AG04450 (cell line): ENCODE measurements at regions of chr10 and their contacts with region 1.

Region 1: GRCh38 chr10:30591249-30591670 is 38.3 kb downstream of the LYZL2 start:
- DNase-seq: peak; percentile 10
- H3K4me3 ChIP-seq: no peak overlapping the region
- H3K27ac ChIP-seq: no peak overlapping the region
- H3K27me3 ChIP-seq: peaks cover 16% of the 10 kb centered on the region
- CTCF ChIP-seq: peak; percentile 81

Region 2: GRCh38 chr10:30270247-30270646 is 321.0 kb before region 1 on chr10:
- CTCF ChIA-PET with region 1: interaction called, 13 read pairs
- POLR2A ChIA-PET with region 1: no interaction called
- DNase-seq: no peak
- H3K4me3 ChIP-seq: no peak overlapping the region
- H3K27ac ChIP-seq: no peak overlapping the region
- H3K27me3 ChIP-seq: peaks cover 14% of the 10 kb centered on the region
- CTCF ChIP-seq: peak; percentile 37

Region 3: DNA sequence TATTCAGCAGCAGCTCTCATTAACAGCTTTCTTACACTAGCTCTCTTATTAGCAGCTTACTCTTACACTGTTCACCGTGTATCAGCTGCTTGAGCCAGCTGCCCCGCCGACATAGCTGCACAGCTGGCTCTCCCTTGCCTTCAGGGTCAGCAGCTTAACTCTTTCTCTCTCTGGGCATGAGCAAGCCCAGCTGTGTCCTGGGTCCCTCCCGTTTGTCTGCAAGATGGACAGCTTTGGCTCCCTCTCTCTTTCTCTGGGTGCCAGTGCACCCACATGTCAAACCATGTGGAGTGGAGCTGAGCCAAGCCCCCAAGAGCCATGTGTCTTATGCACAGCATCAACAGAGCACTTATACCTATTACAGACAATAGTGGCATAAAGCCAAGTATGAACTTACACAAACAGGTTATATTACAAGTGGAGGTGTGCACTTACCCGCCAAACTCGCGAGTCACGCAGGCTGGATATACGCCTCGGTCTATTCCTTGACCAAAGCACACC is 206.5 kb before region 1 on chr10:
- CTCF ChIA-PET with region 1: interaction called, 131 read pairs
- POLR2A ChIA-PET with region 1: no interaction called
- DNase-seq: no peak
- H3K4me3 ChIP-seq: no peak overlapping the region
- H3K27ac ChIP-seq: no peak overlapping the region
- H3K27me3 ChIP-seq: peaks cover 30% of the 10 kb centered on the region
- CTCF ChIP-seq: peak; percentile 51

Region 4: GRCh38 chr10:30404540-30404939 is 186.7 kb before region 1 on chr10:
- CTCF ChIA-PET with region 1: interaction called, 11 read pairs
- POLR2A ChIA-PET with region 1: no interaction called
- DNase-seq: no peak
- H3K4me3 ChIP-seq: no peak overlapping the region
- H3K27ac ChIP-seq: no peak overlapping the region
- H3K27me3 ChIP-seq: peaks cover 10% of the 10 kb centered on the region
- CTCF ChIP-seq: no peak

Region 5: GRCh38 chr10:30431435-30431911 is 159.8 kb before region 1 on chr10:
- CTCF ChIA-PET with region 1: interaction called, 10 read pairs
- POLR2A ChIA-PET with region 1: no interaction called
- DNase-seq: no peak
- H3K4me3 ChIP-seq: no peak overlapping the region
- H3K27ac ChIP-seq: no peak overlapping the region
- H3K27me3 ChIP-seq: no peaks in the 10 kb centered on the region
- CTCF ChIP-seq: no peak

Region 6: GRCh38 chr10:30529373-30529998 is 61.8 kb before region 1 on chr10:
- CTCF ChIA-PET with region 1: interaction called, 17 read pairs
- POLR2A ChIA-PET with region 1: no interaction called
- DNase-seq: no peak
- H3K4me3 ChIP-seq: no peak overlapping the region
- H3K27ac ChIP-seq: no peak overlapping the region
- H3K27me3 ChIP-seq: peaks cover 2% of the 10 kb centered on the region
- CTCF ChIP-seq: no peak

Region 7: DNA sequence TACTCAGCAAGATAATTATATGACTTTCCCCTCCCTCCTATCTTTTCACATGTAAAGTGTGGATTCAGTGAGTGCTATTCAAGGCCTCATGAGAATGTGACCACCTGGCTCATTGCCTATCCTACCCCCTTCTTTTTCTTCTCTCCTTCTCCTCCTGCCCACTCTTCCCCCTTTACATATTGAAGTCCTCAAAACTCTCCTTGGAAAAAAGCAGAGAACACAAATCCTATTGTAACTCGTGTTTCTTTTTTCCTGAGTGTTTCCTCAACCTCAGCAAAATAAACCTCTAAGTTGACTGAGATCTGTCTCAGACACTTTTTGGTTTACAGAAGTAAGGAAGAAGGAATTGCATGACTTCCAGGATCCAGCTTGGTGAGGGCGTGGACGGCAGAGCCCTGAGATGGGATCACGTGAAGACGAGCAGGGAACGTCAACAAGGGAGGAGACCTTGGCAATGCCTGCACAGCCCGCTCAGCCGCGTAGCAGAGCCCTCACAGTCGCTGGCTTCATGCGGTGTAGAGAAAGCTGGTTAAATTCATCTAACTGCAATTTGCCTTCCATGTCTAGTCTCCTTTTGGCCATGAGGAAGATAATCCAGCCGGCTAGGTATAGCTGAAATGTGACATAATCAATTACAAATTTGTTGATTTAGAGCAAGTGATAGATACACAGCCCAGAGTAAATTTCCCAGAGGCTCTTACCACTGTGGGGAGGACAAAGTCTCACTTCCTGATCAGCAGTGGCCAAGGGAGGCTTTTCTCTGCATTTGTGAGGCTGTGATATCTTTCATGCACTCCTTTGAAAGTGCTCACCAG is 37.4 kb before region 1 on chr10:
- CTCF ChIA-PET with region 1: interaction called, 10 read pairs
- POLR2A ChIA-PET with region 1: no interaction called
- DNase-seq: no peak
- H3K4me3 ChIP-seq: peak overlapping the region; percentile 23; the same call in 1 of the 2 replicates
- H3K27ac ChIP-seq: peak overlapping the region; percentile 21
- H3K27me3 ChIP-seq: peaks cover 2% of the 10 kb centered on the region
- CTCF ChIP-seq: no peak